PC-9 (cell line): ENCODE measurements at regions of chr2 and their contacts with region 1.

Region 1: GRCh38 chr2:137969418-137969765 is 5.1 kb downstream of the HNMT start:
- DNase-seq: peak in 1 of 2 experiments; percentile 90
- H3K4me3 ChIP-seq: peak overlapping the region; percentile 4; the same call in 1 of the 2 replicates
- H3K27ac ChIP-seq: peak overlapping the region; percentile 80
- H3K4me1 ChIP-seq: peaks cover 49% of the 10 kb centered on the region
- H3K27me3 ChIP-seq: no peaks in the 10 kb centered on the region
- CTCF ChIP-seq: no peak

Region 2: GRCh38 chr2:137980459-137980858 is 11.1 kb after region 1 on chr2:
- CTCF ChIA-PET with region 1: interaction called, 16 read pairs
- POLR2A ChIA-PET with region 1: interaction called, 4 read pairs
- intact Hi-C with region 1: no loop called
- DNase-seq: no peak
- H3K4me3 ChIP-seq: no peak overlapping the region
- H3K27ac ChIP-seq: no peak overlapping the region
- H3K4me1 ChIP-seq: peaks cover 19% of the 10 kb centered on the region
- H3K27me3 ChIP-seq: no peaks in the 10 kb centered on the region
- CTCF ChIP-seq: no peak